ENCODE measurements at regions of chr1 and their contacts with region 1.

Region 1: GRCh38 chr1:91830242-91831131 is 55.5 kb downstream of the TGFBR3 start:
- DNase-seq: peak; percentile 72 to 87
- ATAC-seq: peak; percentile 72 to 88 (median 78)
- H3K4me3 ChIP-seq: no peak overlapping the region
- H3K27ac ChIP-seq: peak overlapping the region; percentile 56 to 88 (median 78)
- H3K4me1 ChIP-seq: peaks cover 17 to 58% (median 42%) of the 10 kb centered on the region in 9 donors
- H3K27me3 ChIP-seq: no peaks in the 10 kb centered on the region
- CTCF ChIP-seq: peak in 7 of 9 donors; percentile 35 to 71 (median 41)

Region 2: DNA sequence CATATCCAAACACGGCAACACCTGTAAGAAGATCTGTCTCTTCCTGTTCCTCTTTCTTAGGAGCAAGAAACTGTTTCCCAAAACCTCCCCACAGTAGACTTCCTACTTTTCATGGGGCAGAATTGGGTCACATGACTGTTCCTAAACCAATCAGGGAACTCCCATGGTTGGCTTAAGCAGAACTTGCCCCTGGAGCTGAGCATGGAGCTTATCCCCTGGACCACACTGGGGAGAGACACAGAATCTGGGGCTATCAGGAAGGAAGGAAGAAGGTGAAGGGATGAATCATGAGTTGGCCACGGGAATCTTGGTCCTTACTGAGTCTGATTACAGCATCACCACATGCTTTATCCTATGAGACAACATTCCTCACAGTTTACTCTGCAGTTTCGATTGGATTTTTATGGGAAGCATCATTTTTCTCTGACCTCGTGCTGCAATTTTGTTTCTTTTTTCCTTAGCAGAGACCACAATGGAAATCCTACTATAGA is 248.0 kb before region 1 on chr1:
- intact Hi-C with region 1: loop called in 1 of 10 experiments (anchors 10 kb)
- DNase-seq: no peak
- ATAC-seq: peak in 2 of 8 donors; percentile 40 to 65
- H3K4me3 ChIP-seq: no peak overlapping the region
- H3K27ac ChIP-seq: peak overlapping the region in 3 of 10 donors; percentile 12 to 51 (median 45)
- H3K4me1 ChIP-seq: peaks cover 0 to 50% (median 22%) of the 10 kb centered on the region in 9 donors
- H3K27me3 ChIP-seq: no peaks in the 10 kb centered on the region
- CTCF ChIP-seq: no peak

Region 3: GRCh38 chr1:91712981-91713841 is 117.3 kb before region 1 on chr1:
- intact Hi-C with region 1: loop called in 1 of 10 experiments (anchors 10 kb)
- DNase-seq: peak; percentile 56 to 67
- ATAC-seq: peak; percentile 74 to 89 (median 85)
- H3K4me3 ChIP-seq: peak overlapping the region in 7 of 10 donors; percentile 0 to 28 (median 4)
- H3K27ac ChIP-seq: peak overlapping the region; percentile 67 to 87 (median 80)
- H3K4me1 ChIP-seq: peaks cover 13 to 58% (median 33%) of the 10 kb centered on the region in 9 donors
- H3K27me3 ChIP-seq: no peaks in the 10 kb centered on the region
- CTCF ChIP-seq: peak in 1 of 9 donors; percentile 11

Region 4: DNA sequence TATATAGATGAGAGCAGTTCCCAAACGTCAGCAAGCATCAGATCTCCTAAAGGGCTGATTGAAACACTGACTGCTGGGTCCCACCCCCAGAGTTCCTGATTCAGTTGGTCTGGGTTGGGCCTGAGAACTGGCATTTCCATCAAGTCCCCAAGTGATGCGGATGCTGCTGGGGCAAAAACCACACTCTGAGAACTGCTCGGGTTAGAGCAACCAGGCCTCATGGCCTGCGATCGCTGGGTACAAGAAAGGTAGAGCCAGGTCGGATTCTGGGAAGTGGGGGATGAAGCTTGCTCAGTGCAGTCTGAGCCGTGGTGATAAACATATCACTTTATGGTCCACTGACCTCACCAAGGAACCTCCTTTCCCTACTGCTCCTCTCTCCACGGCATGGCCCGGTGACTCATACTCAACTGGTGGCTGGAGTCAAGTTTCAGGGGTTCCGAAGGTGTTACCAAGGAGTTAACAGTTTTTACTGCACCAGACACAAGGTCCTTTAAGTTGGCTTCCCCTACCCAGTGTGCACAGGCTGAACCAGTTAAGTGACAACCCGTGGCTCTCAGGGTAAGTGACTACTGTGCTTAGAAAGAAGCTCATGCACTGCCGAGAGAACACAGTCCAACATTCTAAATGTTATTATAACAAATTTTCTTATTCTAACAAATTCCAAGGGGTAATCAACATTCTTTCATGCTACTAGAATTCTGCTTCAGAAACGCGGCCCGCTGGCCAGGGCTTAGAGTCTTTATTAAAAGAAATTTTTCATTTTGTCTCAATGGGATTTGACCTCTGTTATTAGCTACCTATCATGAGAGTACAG is 98.0 kb before region 1 on chr1:
- intact Hi-C with region 1: loop called in 1 of 10 experiments (anchors 10 kb)
- DNase-seq: no peak
- ATAC-seq: peak in 4 of 8 donors; percentile 1 to 49 (median 18)
- H3K4me3 ChIP-seq: no peak overlapping the region
- H3K27ac ChIP-seq: peak overlapping the region in 4 of 10 donors; percentile 28 to 58 (median 40)
- H3K4me1 ChIP-seq: peaks cover 12 to 76% (median 62%) of the 10 kb centered on the region in 9 donors
- H3K27me3 ChIP-seq: no peaks in the 10 kb centered on the region
- CTCF ChIP-seq: no peak

Region 5: DNA sequence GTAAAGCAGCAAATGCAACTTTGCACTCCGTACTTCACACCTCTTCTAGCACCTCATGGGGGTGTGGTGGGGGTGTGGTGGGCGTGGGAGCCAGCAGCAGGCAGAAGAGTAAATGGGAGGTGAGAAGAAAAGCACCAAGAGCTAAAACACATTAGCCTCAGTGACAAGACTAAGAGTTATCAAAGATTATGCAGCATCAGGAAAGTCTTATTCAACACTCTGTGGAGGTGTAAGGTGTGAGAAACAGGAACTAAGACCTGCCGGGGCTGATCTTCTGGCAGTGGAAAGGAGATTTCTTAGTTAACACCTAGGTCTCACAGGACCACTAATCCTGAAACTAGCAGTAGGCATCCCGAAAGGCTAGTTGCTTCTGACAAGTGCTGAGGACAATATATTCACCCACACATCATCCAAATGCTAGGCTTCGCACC is 45.6 kb after region 1 on chr1:
- intact Hi-C with region 1: loop called in 1 of 10 experiments (anchors 5 kb)
- DNase-seq: no peak
- ATAC-seq: no peak
- H3K4me3 ChIP-seq: no peak overlapping the region
- H3K27ac ChIP-seq: no peak overlapping the region
- H3K4me1 ChIP-seq: peaks cover 3 to 62% (median 47%) of the 10 kb centered on the region in 9 donors
- H3K27me3 ChIP-seq: no peaks in the 10 kb centered on the region
- CTCF ChIP-seq: no peak

Region 6: DNA sequence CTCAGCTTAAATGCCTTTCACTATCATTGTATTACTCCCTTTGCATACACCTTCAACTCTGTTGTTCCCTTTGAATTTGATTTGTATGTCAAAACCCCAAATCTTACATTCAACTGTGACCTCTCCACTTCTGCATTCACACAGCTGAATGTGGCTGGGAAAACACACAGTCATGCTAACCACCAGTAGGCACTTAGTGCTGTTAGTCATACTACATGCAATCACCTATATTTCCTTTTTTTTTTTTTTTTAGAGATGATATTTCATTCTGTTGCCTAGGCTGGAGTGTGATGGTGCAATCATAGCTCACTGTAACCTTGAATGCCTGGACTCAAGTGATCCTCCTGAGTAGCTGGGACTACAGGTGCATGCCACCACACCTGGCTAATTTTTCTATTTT is 265.8 kb after region 1 on chr1:
- intact Hi-C with region 1: no loop called
- DNase-seq: no peak
- ATAC-seq: no peak
- H3K4me3 ChIP-seq: no peak overlapping the region
- H3K27ac ChIP-seq: no peak overlapping the region
- H3K4me1 ChIP-seq: peaks cover 0 to 12% (median 0%) of the 10 kb centered on the region in 9 donors
- H3K27me3 ChIP-seq: no peaks in the 10 kb centered on the region
- CTCF ChIP-seq: no peak